Caco-2 (cell line): ENCODE measurements at regions of chr15 and their contacts with region 1.

Region 1: DNA sequence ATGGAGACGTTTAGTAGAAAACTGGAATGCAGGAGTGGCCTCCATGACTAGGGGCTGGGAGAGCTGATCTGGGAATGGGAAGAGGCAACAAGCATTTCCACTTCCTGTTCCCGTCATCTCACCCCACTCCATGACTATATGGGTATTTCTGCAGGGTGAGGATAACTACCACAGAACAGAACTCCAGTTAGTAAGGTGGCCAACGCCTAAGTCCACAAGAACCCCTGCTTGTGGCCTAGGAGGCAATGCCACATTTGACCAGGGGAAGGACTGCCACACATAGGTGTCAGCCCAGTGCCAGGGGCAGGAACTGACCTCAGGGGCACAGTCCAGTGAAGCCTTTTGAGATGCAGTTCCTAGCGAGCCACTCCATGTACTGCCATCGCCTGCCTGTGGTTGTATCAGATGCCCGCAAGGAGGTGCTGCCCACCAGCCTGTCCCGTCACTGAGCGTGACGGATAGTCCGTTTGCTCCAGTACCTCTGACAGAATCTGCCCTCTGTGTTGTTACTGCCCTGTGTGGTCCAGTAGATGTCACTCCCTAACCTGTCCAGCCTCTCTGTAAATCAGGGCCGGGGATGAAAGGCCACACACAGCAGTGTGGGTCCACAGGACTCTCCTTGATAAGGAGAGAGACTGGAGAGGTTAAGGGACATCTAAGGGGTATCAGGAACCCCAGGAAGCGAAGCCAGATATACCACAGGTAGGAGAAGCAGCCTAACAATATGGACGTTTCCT is 3.5 kb upstream of the MTFMT start:
- DNase-seq: peak; percentile 88 to 92
- H3K4me3 ChIP-seq: no peak overlapping the region
- H3K4me3 Mint-ChIP-seq: peak overlapping the region; percentile 7
- H3K27ac Mint-ChIP-seq: peak overlapping the region; percentile 22
- H3K4me1 ChIP-seq: peaks cover 30% of the 10 kb centered on the region
- H3K4me1 Mint-ChIP-seq: peaks cover 7% of the 10 kb centered on the region
- H3K27me3 ChIP-seq: no peaks in the 10 kb centered on the region
- H3K27me3 Mint-ChIP-seq: no peaks in the 10 kb centered on the region
- CTCF ChIP-seq: peak; percentile 85 to 91

Region 2: DNA sequence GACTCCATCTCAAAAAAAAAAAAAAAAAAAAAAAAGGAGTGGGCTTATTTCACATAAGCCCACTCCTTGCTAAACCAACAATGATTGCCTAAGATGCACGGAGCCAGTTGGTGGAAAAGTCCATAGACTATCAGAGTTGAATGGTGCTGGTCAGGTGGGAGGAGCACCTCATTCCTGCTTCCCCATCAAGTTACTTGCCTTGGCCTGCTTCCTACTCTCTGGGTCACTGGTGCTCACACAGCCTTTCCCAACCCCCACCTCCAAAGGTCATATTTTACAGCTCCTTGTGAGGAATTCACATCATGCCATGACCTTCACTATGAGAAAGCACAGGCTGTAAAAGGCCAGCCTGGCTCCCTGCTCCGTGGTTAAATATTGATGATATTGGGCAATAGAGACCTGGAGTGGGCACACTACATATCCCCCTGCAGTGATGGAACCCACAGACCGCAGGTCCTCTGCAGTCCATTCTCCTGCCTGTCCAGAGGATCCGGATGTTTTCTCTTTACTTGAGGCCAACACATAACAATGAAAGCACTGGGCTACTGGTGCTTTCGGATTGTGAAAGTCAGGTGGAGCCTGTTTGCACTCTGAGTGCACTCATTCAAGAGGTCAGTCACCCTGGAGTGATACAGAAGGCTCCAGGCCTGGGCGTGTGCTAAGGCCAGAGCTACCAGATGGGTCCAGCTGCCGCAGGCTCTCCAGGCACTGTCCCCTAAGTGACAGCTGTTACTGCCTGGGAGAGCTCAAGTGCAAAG is 11.9 kb after region 1 on chr15 and contains the start of gene SLC51B:
- CTCF ChIA-PET with region 1: interaction called, 41 read pairs
- POLR2A ChIA-PET with region 1: interaction called, 4 read pairs
- intact Hi-C with region 1: loop called (anchors 1 kb)
- DNase-seq: peak; percentile 91 to 96
- H3K4me3 ChIP-seq: peak within 1 kb of the TSS; percentile 29
- H3K4me3 Mint-ChIP-seq: peak within 1 kb of the TSS; percentile 61
- H3K27ac Mint-ChIP-seq: peak within 1 kb of the TSS; percentile 70
- H3K4me1 ChIP-seq: peaks cover 59% of the 10 kb centered on the region
- H3K4me1 Mint-ChIP-seq: peaks cover 44% of the 10 kb centered on the region
- H3K27me3 ChIP-seq: no peaks in the 10 kb centered on the region
- H3K27me3 Mint-ChIP-seq: no peaks in the 10 kb centered on the region
- CTCF ChIP-seq: no peak
- total RNA-seq, gene SLC51B: 15.4 and 17.1 TPM in 2 replicates

Region 3: DNA sequence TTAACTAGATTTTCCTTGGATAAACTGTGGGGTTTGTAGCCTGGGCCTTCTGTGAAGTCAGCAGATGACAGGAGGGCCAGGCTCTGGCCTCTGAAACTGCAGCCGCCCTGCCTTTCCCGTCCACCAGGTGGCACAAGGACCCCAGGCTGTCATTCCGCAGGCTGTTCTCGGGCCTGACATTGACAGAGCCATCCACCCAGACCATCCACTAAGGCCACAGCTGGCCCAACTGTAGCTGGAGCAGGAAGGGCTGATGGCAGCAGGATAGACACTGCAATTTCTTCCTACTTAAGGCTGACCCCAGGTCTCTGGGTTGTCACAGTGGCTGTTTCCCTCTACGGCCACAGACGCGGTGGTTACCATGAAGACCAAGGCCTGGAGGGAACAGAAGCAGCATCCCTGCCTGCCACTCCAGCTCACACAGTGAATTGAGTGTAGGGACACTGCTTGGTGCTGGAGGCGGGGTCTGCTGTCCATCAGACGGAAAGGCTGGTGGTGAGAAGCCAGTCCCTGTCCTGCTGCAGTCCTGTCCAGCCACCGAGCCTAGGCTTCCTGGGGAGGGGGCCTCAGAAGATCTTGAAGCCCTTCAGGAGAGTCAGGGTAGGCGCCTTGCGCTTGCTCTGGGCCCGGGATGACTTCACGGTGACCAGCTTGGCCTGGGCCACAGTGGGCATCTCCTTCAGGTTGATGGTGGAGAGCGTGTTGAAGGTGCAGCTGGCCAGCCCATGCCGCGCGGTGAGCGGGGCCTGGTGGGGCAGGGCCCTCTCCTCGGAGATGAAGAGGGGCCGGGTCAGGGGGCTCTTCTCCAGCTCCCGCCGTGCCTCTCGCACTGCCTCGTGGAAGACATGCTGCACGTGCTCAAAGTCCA is 21.6 kb after region 1 on chr15:
- CTCF ChIA-PET with region 1: interaction called, 20 read pairs
- POLR2A ChIA-PET with region 1: no interaction called
- intact Hi-C with region 1: loop called (anchors 1 kb)
- DNase-seq: peak; percentile 82 to 87
- H3K4me3 ChIP-seq: no peak overlapping the region
- H3K4me3 Mint-ChIP-seq: no peak overlapping the region
- H3K27ac Mint-ChIP-seq: peak overlapping the region; percentile 91
- H3K4me1 ChIP-seq: peaks cover 48% of the 10 kb centered on the region
- H3K4me1 Mint-ChIP-seq: peaks cover 31% of the 10 kb centered on the region
- H3K27me3 ChIP-seq: no peaks in the 10 kb centered on the region
- H3K27me3 Mint-ChIP-seq: no peaks in the 10 kb centered on the region
- CTCF ChIP-seq: peak; percentile 84 to 93

Region 4: DNA sequence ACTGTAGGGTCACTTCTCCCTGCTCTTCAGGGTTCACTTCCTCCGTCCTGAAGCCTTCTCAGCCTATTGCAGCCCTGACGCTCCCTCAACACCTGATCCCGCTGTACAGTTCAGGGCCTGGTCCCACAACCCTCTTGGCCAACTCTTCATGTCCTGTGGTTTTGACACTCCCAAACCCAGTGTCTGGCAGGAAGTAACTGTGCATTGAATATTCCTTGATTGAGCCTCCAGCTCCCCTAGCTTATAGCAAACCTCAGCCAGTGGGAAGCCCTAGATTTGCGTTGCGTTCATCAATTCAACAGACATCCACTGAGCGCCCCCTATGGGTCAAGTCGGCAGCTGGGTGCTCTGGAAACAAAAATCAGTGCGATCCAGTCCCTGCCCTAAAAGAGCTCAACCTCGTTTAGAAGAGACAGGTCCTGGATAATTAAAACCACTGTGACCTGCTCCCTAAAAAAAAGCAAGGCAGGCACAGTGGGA is 68.5 kb after region 1 on chr15:
- CTCF ChIA-PET with region 1: interaction called, 37 read pairs
- POLR2A ChIA-PET with region 1: interaction called, 6 read pairs
- intact Hi-C with region 1: loop called (anchors 1 kb)
- DNase-seq: peak; percentile 66 to 81
- H3K4me3 ChIP-seq: no peak overlapping the region
- H3K4me3 Mint-ChIP-seq: no peak overlapping the region
- H3K27ac Mint-ChIP-seq: peak overlapping the region; percentile 9
- H3K4me1 ChIP-seq: no peaks in the 10 kb centered on the region
- H3K4me1 Mint-ChIP-seq: peaks cover 6% of the 10 kb centered on the region
- H3K27me3 ChIP-seq: no peaks in the 10 kb centered on the region
- H3K27me3 Mint-ChIP-seq: no peaks in the 10 kb centered on the region
- CTCF ChIP-seq: peak; percentile 74 to 84

Region 5: GRCh38 chr15:65275728-65276126 is 242.8 kb after region 1 on chr15:
- CTCF ChIA-PET with region 1: interaction called, 4 read pairs
- POLR2A ChIA-PET with region 1: no interaction called
- intact Hi-C with region 1: loop called (anchors 1 kb)
- DNase-seq: peak; percentile 65 to 80
- H3K4me3 ChIP-seq: no peak overlapping the region
- H3K4me3 Mint-ChIP-seq: peak overlapping the region; percentile 3
- H3K27ac Mint-ChIP-seq: peak overlapping the region; percentile 88
- H3K4me1 ChIP-seq: peaks cover 48% of the 10 kb centered on the region
- H3K4me1 Mint-ChIP-seq: peaks cover 42% of the 10 kb centered on the region
- H3K27me3 ChIP-seq: no peaks in the 10 kb centered on the region
- H3K27me3 Mint-ChIP-seq: no peaks in the 10 kb centered on the region
- CTCF ChIP-seq: no peak

Region 6: GRCh38 chr15:65304389-65305144 is 271.6 kb after region 1 on chr15 and contains the start of gene RNU5B-1:
- CTCF ChIA-PET with region 1: no interaction called
- POLR2A ChIA-PET with region 1: no interaction called
- intact Hi-C with region 1: loop called (anchors 1 kb)
- DNase-seq: peak; percentile 86 to 89
- H3K4me3 ChIP-seq: peak within 1 kb of the TSS; percentile 41
- H3K4me3 Mint-ChIP-seq: peak within 1 kb of the TSS; percentile 90
- H3K27ac Mint-ChIP-seq: peak within 1 kb of the TSS; percentile 95
- H3K4me1 ChIP-seq: peaks cover 6% of the 10 kb centered on the region; the same call in 1 of the 2 replicates
- H3K4me1 Mint-ChIP-seq: no peaks in the 10 kb centered on the region
- H3K27me3 ChIP-seq: no peaks in the 10 kb centered on the region
- H3K27me3 Mint-ChIP-seq: no peaks in the 10 kb centered on the region
- CTCF ChIP-seq: peak in 1 of 2 experiments; percentile 77
- total RNA-seq, gene RNU5B-1: not detected in 2 replicates